Calu3 (cell line): ENCODE measurements at regions of chr18 and their contacts with region 1.

Region 1: DNA sequence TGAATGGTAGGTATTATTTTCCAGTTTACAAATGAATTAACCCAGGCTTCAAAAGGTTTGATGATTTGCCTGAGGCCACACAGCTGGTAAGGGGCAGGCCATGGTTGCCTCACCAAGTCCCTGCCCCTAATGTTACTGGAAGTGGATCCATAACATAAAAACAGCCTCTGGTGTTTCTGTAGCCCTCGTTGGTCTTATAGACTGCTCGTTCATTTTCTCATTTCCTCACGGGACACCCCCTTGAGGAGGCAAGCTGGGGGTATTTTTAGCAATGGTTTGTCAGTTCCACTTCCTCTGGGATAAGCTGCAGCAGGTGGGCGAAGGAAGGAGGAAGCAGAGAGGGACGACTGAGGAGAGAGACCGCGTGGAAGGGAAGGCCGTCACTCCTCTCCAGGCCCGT is 32.9 kb upstream of the NDUFV2 start:
- DNase-seq: no peak
- H3K4me3 Mint-ChIP-seq: no peak overlapping the region
- H3K27ac Mint-ChIP-seq: no peak overlapping the region
- H3K4me1 Mint-ChIP-seq: peaks cover 15% of the 10 kb centered on the region
- H3K27me3 Mint-ChIP-seq: no peaks in the 10 kb centered on the region
- CTCF ChIP-seq: no peak

Region 2: DNA sequence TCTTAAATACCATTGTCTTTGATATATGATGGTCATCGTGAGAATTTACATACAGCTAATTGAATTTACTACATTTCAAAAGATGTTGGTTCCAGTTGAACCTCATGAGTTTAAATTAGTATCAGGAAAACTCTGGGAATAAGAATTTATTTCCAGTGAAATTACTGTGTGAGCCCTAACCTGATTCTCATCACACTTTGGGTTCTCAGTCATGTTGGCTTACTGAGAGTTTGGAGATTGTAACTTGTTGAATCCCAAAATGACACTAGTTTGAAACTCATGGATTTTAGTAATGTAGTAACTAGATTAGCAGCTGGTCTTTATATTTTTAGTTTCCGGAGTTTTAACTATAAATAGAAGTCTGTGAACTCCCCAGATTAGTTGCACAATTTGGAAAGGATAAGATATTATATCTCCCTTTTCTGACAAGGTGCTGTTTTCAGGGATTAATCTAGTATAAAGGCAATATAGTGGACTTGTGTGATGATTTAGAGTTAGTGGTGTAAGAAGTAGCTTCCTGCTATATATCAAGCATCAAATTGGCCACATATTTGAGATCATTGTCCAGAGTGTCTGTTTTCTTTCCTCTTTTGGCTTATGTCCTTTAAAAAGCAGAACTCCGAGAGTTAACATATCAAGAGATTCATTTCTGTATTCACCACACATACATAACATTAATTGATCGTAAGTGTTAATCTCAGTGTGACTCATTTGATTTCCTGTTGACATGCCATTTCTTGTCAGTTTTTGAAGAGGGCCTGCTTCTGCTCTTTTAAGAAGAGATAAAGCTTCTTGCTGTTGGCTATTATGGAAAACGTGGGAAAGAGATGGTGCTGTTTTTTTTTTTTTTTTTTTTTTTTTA is 48.6 kb after region 1 on chr18:
- CTCF ChIA-PET with region 1: interaction called, 6 read pairs
- intact Hi-C with region 1: loop called (anchors 5 kb)
- DNase-seq: no peak
- H3K4me3 Mint-ChIP-seq: peak overlapping the region; percentile 46
- H3K27ac Mint-ChIP-seq: peak overlapping the region; percentile 72
- H3K4me1 Mint-ChIP-seq: peaks cover 40% of the 10 kb centered on the region
- H3K27me3 Mint-ChIP-seq: no peaks in the 10 kb centered on the region
- CTCF ChIP-seq: no peak

Region 3: GRCh38 chr18:9147440-9148202 is 78.0 kb after region 1 on chr18:
- CTCF ChIA-PET with region 1: interaction called, 11 read pairs
- intact Hi-C with region 1: loop called (anchors 1 kb)
- DNase-seq: peak; percentile 39
- H3K4me3 Mint-ChIP-seq: no peak overlapping the region
- H3K27ac Mint-ChIP-seq: no peak overlapping the region
- H3K4me1 Mint-ChIP-seq: peaks cover 31% of the 10 kb centered on the region
- H3K27me3 Mint-ChIP-seq: no peaks in the 10 kb centered on the region
- CTCF ChIP-seq: peak; percentile 61

Region 4: DNA sequence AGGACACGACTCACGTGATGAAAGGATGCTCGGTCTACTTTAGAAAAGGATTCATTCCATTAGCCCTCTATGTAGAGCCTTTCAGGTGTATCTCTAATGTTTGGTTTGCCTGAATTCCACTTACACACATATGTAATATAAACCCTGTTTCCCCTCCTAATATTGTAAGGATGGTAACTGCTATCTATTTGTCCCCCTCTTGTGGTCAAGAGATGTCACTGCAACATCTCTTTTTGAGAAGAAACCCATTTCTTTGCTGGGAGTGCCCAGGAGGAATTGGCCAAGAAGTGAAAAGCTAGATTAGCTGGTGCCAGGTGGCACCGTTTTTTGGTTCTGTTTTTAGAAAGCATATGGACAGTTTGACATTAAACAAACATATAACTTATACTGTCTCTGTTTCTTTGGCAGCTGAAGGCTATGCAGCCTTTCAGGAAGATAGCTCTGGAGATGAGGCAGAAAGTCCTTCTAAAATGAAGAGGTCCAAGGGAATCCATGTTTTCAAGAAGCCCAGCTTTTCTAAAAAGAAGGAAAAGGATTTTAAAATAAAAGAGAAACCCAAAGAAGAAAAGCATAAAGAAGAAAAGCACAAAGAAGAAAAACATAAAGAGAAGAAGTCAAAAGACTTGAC is 446.9 kb after region 1 on chr18:
- CTCF ChIA-PET with region 1: no interaction called
- intact Hi-C with region 1: loop called (anchors 5 kb)
- DNase-seq: no peak
- H3K4me3 Mint-ChIP-seq: no peak overlapping the region
- H3K27ac Mint-ChIP-seq: no peak overlapping the region
- H3K4me1 Mint-ChIP-seq: peaks cover 26% of the 10 kb centered on the region
- H3K27me3 Mint-ChIP-seq: no peaks in the 10 kb centered on the region
- CTCF ChIP-seq: peak; percentile 80